Right lobe of liver (tissue), 6 donors: ENCODE measurements at regions of chr15 and their contacts with region 1.

Region 1: DNA sequence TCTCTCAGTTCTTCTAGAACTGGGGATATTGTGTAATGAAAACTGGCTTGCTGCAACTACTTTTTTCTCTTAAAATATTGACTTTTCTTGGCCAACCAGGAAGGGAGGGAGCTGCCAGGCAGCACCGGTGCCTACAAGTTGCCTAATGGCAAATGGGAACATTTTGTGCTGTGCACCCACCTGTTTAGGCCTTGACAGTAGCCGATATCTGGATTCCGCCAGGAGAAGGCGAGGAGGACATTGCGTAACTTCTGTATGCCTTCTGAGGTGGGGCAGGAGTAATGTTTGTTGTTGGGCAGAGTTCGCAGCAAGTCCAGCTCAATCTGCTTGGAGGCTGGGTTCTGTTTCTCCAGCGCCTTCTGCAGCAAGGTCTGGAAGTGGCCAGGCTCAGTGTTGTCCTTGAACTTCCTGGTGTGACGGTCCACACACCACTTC is 64.9 kb downstream of the TBC1D2B start:
- DNase-seq: peak; percentile 69 to 95 (median 88)
- ATAC-seq: peak; percentile 54 to 80 (median 62)
- H3K4me3 ChIP-seq: peak overlapping the region in 1 of 3 donors; percentile 19
- H3K27ac ChIP-seq: peak overlapping the region in 2 of 3 donors; percentile 85 to 93
- H3K4me1 ChIP-seq: peaks cover 0 to 98% (median 41%) of the 10 kb centered on the region in 4 donors
- H3K27me3 ChIP-seq: no peaks in the 10 kb centered on the region
- CTCF ChIP-seq: no peak
- POLR2A ChIP-seq: peak; percentile 31

Region 2: GRCh38 chr15:78072080-78072892 is 59.6 kb after region 1 on chr15:
- intact Hi-C with region 1: loop called (anchors 5 to 10 kb)
- DNase-seq: peak in 1 of 3 donors; percentile 79
- ATAC-seq: peak; percentile 53 to 69 (median 60)
- H3K4me3 ChIP-seq: peak overlapping the region in 1 of 3 donors; percentile 1
- H3K27ac ChIP-seq: peak overlapping the region; percentile 83 to 89 (median 85)
- H3K4me1 ChIP-seq: peaks cover 0 to 68% (median 25%) of the 10 kb centered on the region in 4 donors
- H3K27me3 ChIP-seq: no peaks in the 10 kb centered on the region
- CTCF ChIP-seq: no peak
- POLR2A ChIP-seq: peak; percentile 83